Sigmoid colon (tissue), 7 donors: ENCODE measurements at regions of chr3 and their contacts with region 1.

Region 1: GRCh38 chr3:149771652-149772271 is 19.5 kb upstream of the COMMD2 start:
- DNase-seq: peak; percentile 65
- H3K4me3 ChIP-seq: no peak overlapping the region
- H3K27ac ChIP-seq: no peak overlapping the region
- H3K4me1 ChIP-seq: no peaks in the 10 kb centered on the region
- H3K27me3 ChIP-seq: no peaks in the 10 kb centered on the region
- CTCF ChIP-seq: peak; percentile 36 to 70 (median 64)
- EP300 ChIP-seq: no peak
- POLR2A ChIP-seq: no peak

Region 2: DNA sequence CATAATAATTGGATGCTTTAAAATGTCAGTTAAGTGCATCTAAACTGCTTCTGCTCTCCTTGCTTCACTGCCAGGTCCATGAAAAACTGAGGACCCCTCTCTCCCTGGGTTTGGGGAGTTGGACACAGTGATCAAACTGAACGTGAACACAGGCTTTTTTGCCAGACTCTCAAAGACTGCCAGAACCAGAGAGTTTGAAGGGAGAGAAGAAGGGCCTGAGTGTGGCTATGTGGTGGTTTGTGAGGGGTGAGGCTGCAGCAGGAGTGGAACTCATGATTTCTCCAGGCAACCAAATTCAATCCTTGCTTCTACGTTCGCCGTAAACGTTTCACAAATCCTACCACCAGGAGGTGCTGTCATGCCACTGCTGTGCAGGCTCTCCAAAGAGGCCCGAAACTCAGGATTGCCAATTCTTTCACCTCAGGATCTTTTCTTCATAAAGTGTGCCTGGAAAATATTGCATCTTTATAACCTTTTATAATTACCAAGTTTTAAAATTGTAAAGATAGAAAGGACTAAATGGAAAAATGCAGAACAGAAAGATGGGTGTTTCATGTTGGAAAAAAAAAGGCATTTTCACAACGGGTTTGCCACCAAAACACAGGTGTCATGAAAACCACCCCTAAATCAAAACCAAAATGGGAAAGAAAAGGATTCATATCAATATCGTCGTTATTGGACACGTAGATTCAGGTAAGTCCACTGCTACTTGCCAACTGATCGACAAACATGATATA is 277.6 kb before region 1 on chr3:
- intact Hi-C with region 1: loop called (anchors 2 kb)
- DNase-seq: peak; percentile 80
- H3K4me3 ChIP-seq: no peak overlapping the region
- H3K27ac ChIP-seq: no peak overlapping the region
- H3K4me1 ChIP-seq: no peaks in the 10 kb centered on the region
- H3K27me3 ChIP-seq: no peaks in the 10 kb centered on the region
- CTCF ChIP-seq: peak; percentile 68 to 81 (median 76)
- EP300 ChIP-seq: no peak
- POLR2A ChIP-seq: no peak

Region 3: GRCh38 chr3:149512209-149512782 is 259.5 kb before region 1 on chr3:
- intact Hi-C with region 1: loop called (anchors 5 kb)
- DNase-seq: peak; percentile 85
- H3K4me3 ChIP-seq: no peak overlapping the region
- H3K27ac ChIP-seq: no peak overlapping the region
- H3K4me1 ChIP-seq: peaks cover 0 to 17% (median 11%) of the 10 kb centered on the region in 4 donors
- H3K27me3 ChIP-seq: no peaks in the 10 kb centered on the region
- CTCF ChIP-seq: peak; percentile 67 to 81 (median 76)
- EP300 ChIP-seq: no peak
- POLR2A ChIP-seq: no peak

Region 4: GRCh38 chr3:149527531-149528339 is 244.0 kb before region 1 on chr3:
- intact Hi-C with region 1: no loop called
- DNase-seq: no peak
- H3K4me3 ChIP-seq: no peak overlapping the region
- H3K27ac ChIP-seq: peak overlapping the region; percentile 52 to 66 (median 56)
- H3K4me1 ChIP-seq: peaks cover 0 to 62% (median 37%) of the 10 kb centered on the region in 4 donors
- H3K27me3 ChIP-seq: no peaks in the 10 kb centered on the region
- CTCF ChIP-seq: peak in 1 of 4 experiments; percentile 26
- EP300 ChIP-seq: no peak
- POLR2A ChIP-seq: no peak

Region 5: DNA sequence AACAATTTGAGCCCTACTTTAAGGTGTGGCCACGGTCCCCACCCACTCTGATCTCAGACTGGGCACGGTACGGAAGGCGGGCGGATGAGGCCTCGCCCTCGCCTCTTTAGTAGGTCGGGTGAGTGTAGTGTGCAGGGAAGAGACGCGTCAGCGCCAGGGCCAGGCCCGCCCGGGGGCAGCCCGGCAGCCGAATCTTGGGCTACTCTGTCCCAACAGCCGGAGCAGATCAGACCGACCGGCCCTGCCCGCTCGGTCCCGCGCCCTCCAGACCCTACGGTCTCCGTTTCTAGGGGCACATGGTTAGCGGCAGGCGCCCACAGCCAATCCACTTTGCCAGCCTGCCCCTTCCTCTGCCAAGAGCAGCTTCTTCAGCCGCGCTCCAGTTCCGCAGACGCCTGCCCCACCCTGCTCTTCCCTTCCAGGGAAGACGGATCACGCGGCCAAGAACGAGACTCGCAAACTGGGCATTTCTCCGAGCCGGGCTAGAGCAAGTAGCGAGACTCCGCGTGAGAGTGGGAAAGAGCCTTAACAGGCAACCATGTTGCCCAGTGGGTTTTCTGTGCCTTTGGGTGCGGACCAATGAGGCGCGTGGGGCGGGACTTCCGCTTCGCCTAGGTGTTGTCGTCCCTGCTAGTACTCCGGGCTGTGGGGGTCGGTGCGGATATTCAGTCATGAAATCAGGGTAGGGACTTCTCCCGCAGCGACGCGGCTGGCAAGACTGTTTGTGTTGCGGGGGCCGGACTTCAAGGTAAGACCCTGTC is 41.0 kb after region 1 on chr3 and contains the start of gene RNF13:
- intact Hi-C with region 1: loop called (anchors 5 kb)
- DNase-seq: peak; percentile 99
- H3K4me3 ChIP-seq: peak within 1 kb of the TSS; percentile 66 to 75 (median 70)
- H3K27ac ChIP-seq: peak within 1 kb of the TSS; percentile 97 to 99 (median 97)
- H3K4me1 ChIP-seq: peaks cover 0 to 57% (median 45%) of the 10 kb centered on the region in 4 donors
- H3K27me3 ChIP-seq: no peaks in the 10 kb centered on the region
- CTCF ChIP-seq: no peak
- EP300 ChIP-seq: peak in 1 of 4 donors; percentile 47
- POLR2A ChIP-seq: peak; percentile 59 to 61
- total RNA-seq, gene RNF13: 78.3 to 110 (median 94.1) TPM